SK-N-SH (cell line): ENCODE measurements at regions of chr6 and their contacts with region 1.

Region 1: DNA sequence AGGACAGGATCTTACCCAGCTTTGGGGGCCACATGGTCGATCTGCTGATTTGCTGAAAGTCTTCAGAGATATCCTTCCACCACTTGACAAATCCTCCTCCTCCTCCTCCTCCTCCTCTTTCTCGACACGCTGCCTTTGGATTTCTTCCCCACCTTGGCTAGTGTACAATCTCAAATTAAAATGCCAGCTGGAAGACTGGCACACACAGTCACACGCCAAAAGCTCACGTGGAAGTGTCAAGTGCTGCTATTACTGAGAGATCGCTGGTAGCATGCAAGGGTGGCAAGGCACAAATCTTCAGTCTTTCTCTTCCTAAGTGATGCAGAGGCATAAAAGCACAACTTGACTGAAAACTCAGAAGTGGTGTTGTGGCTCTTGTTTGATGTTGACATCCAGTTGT is 35.3 kb downstream of the GPR6 start:
- DNase-seq: no peak
- H3K4me3 ChIP-seq: no peak overlapping the region
- H3K27ac ChIP-seq: no peak overlapping the region
- H3K4me1 ChIP-seq: no peaks in the 10 kb centered on the region
- H3K27me3 ChIP-seq: no peaks in the 10 kb centered on the region; the same call in 1 of the 2 replicates
- CTCF ChIP-seq: no peak
- EP300 ChIP-seq: no peak
- RAD21 ChIP-seq: no peak

Region 2: GRCh38 chr6:109998159-109998785 is 15.1 kb before region 1 on chr6:
- CTCF ChIA-PET with region 1: no interaction called
- POLR2A ChIA-PET with region 1: no interaction called
- DNase-seq: no peak
- H3K4me3 ChIP-seq: no peak overlapping the region
- H3K27ac ChIP-seq: no peak overlapping the region
- H3K4me1 ChIP-seq: no peaks in the 10 kb centered on the region
- H3K27me3 ChIP-seq: no peaks in the 10 kb centered on the region
- CTCF ChIP-seq: no peak
- EP300 ChIP-seq: no peak
- RAD21 ChIP-seq: no peak

Region 3: DNA sequence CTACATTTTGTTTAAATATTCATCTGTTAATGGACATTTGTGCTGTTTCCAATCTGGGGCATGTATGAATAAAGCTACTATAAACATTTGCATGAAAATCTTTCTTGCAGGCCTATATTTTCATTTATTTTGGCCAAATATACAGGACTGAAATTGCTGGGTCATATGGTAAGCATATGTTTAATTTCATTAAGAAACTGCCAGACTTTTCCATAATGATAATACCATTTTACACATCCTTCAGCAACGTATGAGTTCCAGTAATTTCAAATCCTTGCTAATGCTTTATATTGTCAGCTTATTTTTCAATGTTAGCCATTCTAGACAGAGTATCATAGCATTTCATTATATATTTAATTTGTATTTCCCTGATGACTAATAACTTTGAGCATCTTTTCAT is 15.8 kb after region 1 on chr6:
- CTCF ChIA-PET with region 1: interaction called, 10 read pairs
- POLR2A ChIA-PET with region 1: no interaction called
- DNase-seq: no peak
- H3K4me3 ChIP-seq: no peak overlapping the region
- H3K27ac ChIP-seq: no peak overlapping the region
- H3K4me1 ChIP-seq: no peaks in the 10 kb centered on the region; a peak in 1 of 4 replicates
- H3K27me3 ChIP-seq: no peaks in the 10 kb centered on the region
- CTCF ChIP-seq: no peak
- EP300 ChIP-seq: no peak
- RAD21 ChIP-seq: no peak